ENCODE measurements at regions of chr1 and their contacts with region 1.

Region 1: GRCh38 chr1:206912445-206913095 is 9.2 kb downstream of the FCMR start:
- DNase-seq: peak; percentile 81
- H3K4me3 ChIP-seq: no peak overlapping the region
- H3K27ac ChIP-seq: no peak overlapping the region
- H3K4me1 ChIP-seq: peaks cover 11% of the 10 kb centered on the region
- H3K27me3 ChIP-seq: no peaks in the 10 kb centered on the region
- CTCF ChIP-seq: peak; percentile 76

Region 2: GRCh38 chr1:206489980-206490770 is 422.4 kb before region 1 on chr1:
- intact Hi-C with region 1: loop called (anchors 10 kb)
- DNase-seq: peak; percentile 74
- H3K4me3 ChIP-seq: no peak overlapping the region
- H3K27ac ChIP-seq: no peak overlapping the region
- H3K4me1 ChIP-seq: no peaks in the 10 kb centered on the region
- H3K27me3 ChIP-seq: no peaks in the 10 kb centered on the region
- CTCF ChIP-seq: peak; percentile 71

Region 3: GRCh38 chr1:206635080-206635977 is 277.2 kb before region 1 on chr1 and contains the start of gene DYRK3:
- intact Hi-C with region 1: loop called (anchors 10 kb)
- DNase-seq: peak; percentile 95
- H3K4me3 ChIP-seq: peak within 1 kb of the TSS; percentile 94
- H3K27ac ChIP-seq: peak within 1 kb of the TSS; percentile 68
- H3K4me1 ChIP-seq: peaks cover 6% of the 10 kb centered on the region
- H3K27me3 ChIP-seq: no peaks in the 10 kb centered on the region
- CTCF ChIP-seq: no peak
- total RNA-seq, gene DYRK3: 0.86 to 1.9 TPM

Region 4: GRCh38 chr1:206723812-206724472 is 188.6 kb before region 1 on chr1:
- intact Hi-C with region 1: loop called (anchors 2 kb)
- DNase-seq: no peak
- H3K4me3 ChIP-seq: no peak overlapping the region
- H3K27ac ChIP-seq: no peak overlapping the region
- H3K4me1 ChIP-seq: no peaks in the 10 kb centered on the region
- H3K27me3 ChIP-seq: no peaks in the 10 kb centered on the region
- CTCF ChIP-seq: no peak

Region 5: DNA sequence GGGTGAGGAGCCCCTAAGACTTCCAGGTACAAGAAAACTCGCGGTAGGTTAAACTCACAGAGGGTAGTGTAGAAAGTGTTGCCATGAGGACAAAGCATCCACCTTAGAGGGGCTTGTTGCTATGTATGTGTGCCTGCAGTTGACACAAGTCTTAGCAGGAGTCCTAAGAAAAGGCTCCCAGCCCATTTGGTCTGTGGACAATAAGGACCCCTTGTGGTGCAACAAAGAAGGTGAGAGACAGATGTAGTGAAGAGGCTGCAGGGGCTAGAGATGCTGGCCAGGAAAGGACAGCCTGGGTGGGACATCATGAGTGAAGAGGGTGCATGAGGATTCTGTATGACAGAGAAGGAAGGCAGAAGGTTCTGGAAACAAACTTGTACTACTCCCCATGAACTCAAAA is 104.0 kb before region 1 on chr1:
- intact Hi-C with region 1: loop called (anchors 5 kb)
- DNase-seq: no peak
- H3K4me3 ChIP-seq: no peak overlapping the region
- H3K27ac ChIP-seq: no peak overlapping the region
- H3K4me1 ChIP-seq: no peaks in the 10 kb centered on the region
- H3K27me3 ChIP-seq: no peaks in the 10 kb centered on the region
- CTCF ChIP-seq: no peak

Region 6: GRCh38 chr1:206865013-206865671 is 47.4 kb before region 1 on chr1 and contains the start of gene IL20:
- intact Hi-C with region 1: loop called (anchors 5 kb)
- DNase-seq: peak; percentile 83
- H3K4me3 ChIP-seq: no peak within 1 kb of the TSS
- H3K27ac ChIP-seq: no peak within 1 kb of the TSS
- H3K4me1 ChIP-seq: no peaks in the 10 kb centered on the region
- H3K27me3 ChIP-seq: no peaks in the 10 kb centered on the region
- CTCF ChIP-seq: peak; percentile 89
- total RNA-seq, gene IL20: not detected

Region 7: DNA sequence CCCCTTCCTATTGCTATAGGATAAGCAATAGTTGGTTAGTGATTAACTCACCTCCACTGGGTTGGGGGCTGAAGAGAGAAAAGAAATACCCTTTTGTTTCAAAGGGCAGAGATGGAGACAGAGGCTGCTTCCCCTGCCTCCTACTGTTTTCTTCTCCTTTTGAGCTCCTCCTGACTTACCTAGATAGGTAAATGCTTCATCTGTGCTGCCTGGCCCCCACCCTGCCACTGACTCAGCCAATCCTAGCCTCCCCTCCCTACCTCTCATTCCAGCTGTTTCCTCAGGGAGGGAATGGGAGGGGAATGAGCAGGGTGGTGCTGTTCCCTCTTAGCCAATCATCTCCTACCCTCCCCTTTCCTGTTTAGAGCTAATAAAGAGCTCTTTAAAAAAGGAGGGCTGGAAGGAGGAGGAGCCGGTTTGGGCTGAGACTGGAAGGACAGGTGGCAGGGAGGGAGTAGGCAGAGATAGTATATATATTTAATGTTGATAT is 120.0 kb after region 1 on chr1 and contains the start of gene C1orf116:
- intact Hi-C with region 1: no loop called
- DNase-seq: peak; percentile 87
- H3K4me3 ChIP-seq: peak within 1 kb of the TSS; percentile 30
- H3K27ac ChIP-seq: peak within 1 kb of the TSS; percentile 89
- H3K4me1 ChIP-seq: peaks cover 9% of the 10 kb centered on the region
- H3K27me3 ChIP-seq: no peaks in the 10 kb centered on the region
- CTCF ChIP-seq: no peak
- total RNA-seq, gene C1orf116: 12.0 to 25.5 TPM

Measured in colonic mucosa (tissue), 4 donors.